ENCODE measurements at regions of chr10 and their contacts with region 1.

Region 1: DNA sequence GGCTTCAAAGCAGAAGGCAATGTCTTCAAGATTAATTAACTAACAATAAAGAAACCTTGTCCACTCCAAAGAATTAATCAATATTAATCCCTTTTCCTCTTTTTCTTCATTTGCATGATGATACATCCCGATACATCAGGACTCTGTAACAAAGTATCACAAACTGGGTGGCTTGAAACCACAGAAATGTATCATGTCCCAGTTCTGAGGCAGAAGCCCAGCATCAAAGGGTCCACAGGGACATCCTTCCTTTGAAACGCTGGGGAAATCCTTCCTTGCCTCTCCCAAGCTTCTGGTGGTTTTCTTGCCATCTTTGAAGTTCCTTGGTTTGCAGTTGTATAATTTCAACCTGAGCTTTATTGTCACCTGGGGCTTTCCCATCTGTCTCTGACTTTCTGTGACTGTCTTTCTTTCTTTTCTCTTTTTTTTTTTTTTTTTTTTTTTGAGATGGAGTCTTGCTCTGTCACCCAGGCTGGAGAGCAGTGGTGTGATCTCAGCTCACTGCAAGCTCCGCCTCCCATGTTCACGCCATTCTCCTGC is 210.2 kb upstream of the ADARB2 start:
- DNase-seq: no peak
- H3K4me3 ChIP-seq: no peak overlapping the region
- H3K4me3 Mint-ChIP-seq: no peak overlapping the region
- H3K27ac Mint-ChIP-seq: no peak overlapping the region
- H3K4me1 ChIP-seq: no peaks in the 10 kb centered on the region
- H3K4me1 Mint-ChIP-seq: no peaks in the 10 kb centered on the region
- H3K27me3 ChIP-seq: no peaks in the 10 kb centered on the region
- H3K27me3 Mint-ChIP-seq: peaks cover 14% of the 10 kb centered on the region
- CTCF ChIP-seq: no peak

Region 2: DNA sequence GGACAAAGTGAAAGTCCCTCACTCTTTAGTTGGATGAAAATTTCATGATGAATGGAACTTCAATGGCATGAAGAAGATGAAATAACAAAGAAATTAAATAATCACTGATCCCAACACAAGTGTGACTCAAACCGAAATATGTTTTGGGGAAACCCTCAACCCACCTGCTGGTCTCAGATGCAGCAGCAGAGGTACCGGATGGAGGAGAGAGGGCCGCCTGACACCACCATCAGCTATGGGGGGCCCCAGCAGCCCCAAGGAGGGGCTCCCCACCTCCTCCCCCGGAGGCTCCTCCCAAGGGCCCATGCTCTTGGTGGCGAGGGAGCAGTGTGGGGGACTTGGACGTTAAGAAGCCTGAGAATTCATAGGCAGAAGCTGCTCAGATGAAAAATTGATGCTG is 73.0 kb before region 1 on chr10:
- CTCF ChIA-PET with region 1: no interaction called
- POLR2A ChIA-PET with region 1: no interaction called
- intact Hi-C with region 1: no loop called
- DNase-seq: no peak
- H3K4me3 ChIP-seq: no peak overlapping the region
- H3K4me3 Mint-ChIP-seq: no peak overlapping the region
- H3K27ac Mint-ChIP-seq: no peak overlapping the region
- H3K4me1 ChIP-seq: no peaks in the 10 kb centered on the region
- H3K4me1 Mint-ChIP-seq: no peaks in the 10 kb centered on the region
- H3K27me3 ChIP-seq: no peaks in the 10 kb centered on the region; the same call in 1 of the 2 replicates
- H3K27me3 Mint-ChIP-seq: peaks cover 21% of the 10 kb centered on the region
- CTCF ChIP-seq: no peak

Region 3: GRCh38 chr10:1920127-1920526 is 27.4 kb before region 1 on chr10:
- CTCF ChIA-PET with region 1: interaction called, 11 read pairs
- POLR2A ChIA-PET with region 1: no interaction called
- intact Hi-C with region 1: no loop called
- DNase-seq: no peak
- H3K4me3 ChIP-seq: no peak overlapping the region
- H3K4me3 Mint-ChIP-seq: no peak overlapping the region
- H3K27ac Mint-ChIP-seq: no peak overlapping the region
- H3K4me1 ChIP-seq: no peaks in the 10 kb centered on the region
- H3K4me1 Mint-ChIP-seq: no peaks in the 10 kb centered on the region
- H3K27me3 ChIP-seq: no peaks in the 10 kb centered on the region
- H3K27me3 Mint-ChIP-seq: peaks cover 36% of the 10 kb centered on the region
- CTCF ChIP-seq: no peak